Breast epithelium (tissue), 4 donors: ENCODE measurements at regions of chr7 and their contacts with region 1.

Region 1: GRCh38 chr7:77940647-77941046 is 142.1 kb downstream of the PHTF2 start:
- DNase-seq: no peak
- H3K4me3 ChIP-seq: no peak overlapping the region
- H3K27ac ChIP-seq: no peak overlapping the region
- H3K4me1 ChIP-seq: no peaks in the 10 kb centered on the region
- H3K27me3 ChIP-seq: no peaks in the 10 kb centered on the region
- CTCF ChIP-seq: peak in 2 of 3 donors; percentile 23 to 49
- POLR2A ChIP-seq: no peak

Region 2: GRCh38 chr7:77409739-77410547 is 530.7 kb before region 1 on chr7:
- intact Hi-C with region 1: no loop called
- DNase-seq: no peak
- H3K4me3 ChIP-seq: no peak overlapping the region
- H3K27ac ChIP-seq: peak overlapping the region; percentile 53 to 63
- H3K4me1 ChIP-seq: no peaks in the 10 kb centered on the region
- H3K27me3 ChIP-seq: no peaks in the 10 kb centered on the region
- CTCF ChIP-seq: no peak
- POLR2A ChIP-seq: no peak

Region 3: GRCh38 chr7:77913977-77914607 is 26.6 kb before region 1 on chr7:
- intact Hi-C with region 1: loop called (anchors 2 kb)
- DNase-seq: no peak
- H3K4me3 ChIP-seq: no peak overlapping the region
- H3K27ac ChIP-seq: no peak overlapping the region
- H3K4me1 ChIP-seq: no peaks in the 10 kb centered on the region
- H3K27me3 ChIP-seq: no peaks in the 10 kb centered on the region
- CTCF ChIP-seq: no peak
- POLR2A ChIP-seq: no peak

Region 4: DNA sequence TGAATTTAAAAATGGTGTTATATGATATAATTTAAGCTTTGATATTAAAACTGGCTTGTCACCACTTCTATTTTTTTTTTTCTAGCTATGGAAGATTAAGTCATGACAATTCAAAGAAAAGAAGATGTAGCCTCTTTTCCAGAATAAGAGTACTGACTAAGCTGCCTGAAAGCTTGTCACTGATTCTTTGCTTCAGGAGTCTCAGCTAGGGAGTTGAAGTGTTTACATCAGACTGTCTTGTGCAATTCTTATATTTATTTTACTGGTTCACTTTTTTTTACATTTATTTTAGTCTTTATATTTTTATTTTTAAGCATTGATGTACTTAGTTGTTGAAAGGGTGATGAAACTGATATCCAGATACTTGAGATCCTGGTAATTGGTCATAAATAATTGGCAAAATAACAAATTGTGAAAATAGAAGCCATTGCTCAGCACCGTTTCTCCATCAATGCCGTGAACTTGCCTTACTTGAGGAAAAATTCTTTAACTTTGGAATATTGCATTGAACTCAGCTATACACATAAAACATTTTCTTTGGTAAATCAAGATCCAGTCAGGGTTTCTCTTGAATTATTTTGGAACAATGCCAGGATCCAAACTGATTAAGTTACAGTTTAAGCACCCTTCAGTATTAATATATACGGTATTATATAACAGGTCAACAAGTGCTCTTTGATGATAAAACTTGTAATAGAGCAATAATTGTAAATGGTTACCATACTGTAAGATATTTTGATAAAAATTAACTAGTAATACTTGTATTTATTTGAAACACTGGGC is 14.3 kb after region 1 on chr7:
- intact Hi-C with region 1: loop called (anchors 2 kb)
- DNase-seq: no peak
- H3K4me3 ChIP-seq: no peak overlapping the region
- H3K27ac ChIP-seq: no peak overlapping the region
- H3K4me1 ChIP-seq: no peaks in the 10 kb centered on the region
- H3K27me3 ChIP-seq: no peaks in the 10 kb centered on the region
- CTCF ChIP-seq: no peak
- POLR2A ChIP-seq: no peak

Region 5: DNA sequence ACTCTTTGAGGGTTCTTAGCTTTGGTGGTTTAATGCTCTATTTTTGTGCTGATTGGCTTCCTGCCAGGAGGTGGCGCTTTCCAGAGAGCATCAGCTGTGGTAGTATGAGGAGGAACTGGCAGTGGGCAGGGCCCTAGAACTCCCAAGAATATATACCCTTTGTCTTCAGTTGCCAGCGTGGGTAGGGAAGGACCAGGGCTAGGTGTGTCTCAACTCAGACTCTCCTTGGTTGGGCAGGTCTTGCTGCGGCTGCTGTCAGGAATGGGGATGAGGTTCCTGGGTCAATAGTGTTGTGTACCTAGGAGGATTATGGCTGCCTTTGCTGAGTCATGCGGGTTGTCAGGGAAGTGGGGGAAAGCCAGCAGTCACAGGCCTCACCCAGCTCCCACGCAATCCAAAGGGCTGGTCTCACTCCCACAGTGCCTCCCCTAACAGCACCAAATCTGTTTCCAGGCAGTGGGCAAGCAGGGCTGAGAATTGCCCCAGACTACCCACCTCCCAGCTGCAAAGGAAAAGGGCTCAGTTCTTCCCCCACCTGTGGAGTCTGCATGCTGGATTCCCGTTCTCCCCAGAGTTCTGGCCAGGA is 49.4 kb after region 1 on chr7:
- intact Hi-C with region 1: no loop called
- DNase-seq: no peak
- H3K4me3 ChIP-seq: no peak overlapping the region
- H3K27ac ChIP-seq: no peak overlapping the region
- H3K4me1 ChIP-seq: no peaks in the 10 kb centered on the region
- H3K27me3 ChIP-seq: no peaks in the 10 kb centered on the region
- CTCF ChIP-seq: no peak
- POLR2A ChIP-seq: no peak